Heart left ventricle (tissue), 16 donors: ENCODE measurements at regions of chr16 and their contacts with region 1.

Region 1: GRCh38 chr16:660459-661183 is 7.3 kb upstream of the RHOT2 start:
- DNase-seq: peak; percentile 87 to 93 (median 92)
- ATAC-seq: peak; percentile 81 to 90 (median 82)
- H3K4me3 ChIP-seq: peak overlapping the region in 9 of 12 donors; percentile 11 to 42 (median 32)
- H3K27ac ChIP-seq: peak overlapping the region in 11 of 12 donors; percentile 3 to 80 (median 55)
- H3K4me1 ChIP-seq: peaks cover 0 to 16% (median 11%) of the 10 kb centered on the region in 12 donors
- H3K27me3 ChIP-seq: no peaks in the 10 kb centered on the region
- CTCF ChIP-seq: peak; percentile 36 to 78 (median 57)
- POLR2A ChIP-seq: peak in 1 of 2 donors; percentile 49

Region 2: DNA sequence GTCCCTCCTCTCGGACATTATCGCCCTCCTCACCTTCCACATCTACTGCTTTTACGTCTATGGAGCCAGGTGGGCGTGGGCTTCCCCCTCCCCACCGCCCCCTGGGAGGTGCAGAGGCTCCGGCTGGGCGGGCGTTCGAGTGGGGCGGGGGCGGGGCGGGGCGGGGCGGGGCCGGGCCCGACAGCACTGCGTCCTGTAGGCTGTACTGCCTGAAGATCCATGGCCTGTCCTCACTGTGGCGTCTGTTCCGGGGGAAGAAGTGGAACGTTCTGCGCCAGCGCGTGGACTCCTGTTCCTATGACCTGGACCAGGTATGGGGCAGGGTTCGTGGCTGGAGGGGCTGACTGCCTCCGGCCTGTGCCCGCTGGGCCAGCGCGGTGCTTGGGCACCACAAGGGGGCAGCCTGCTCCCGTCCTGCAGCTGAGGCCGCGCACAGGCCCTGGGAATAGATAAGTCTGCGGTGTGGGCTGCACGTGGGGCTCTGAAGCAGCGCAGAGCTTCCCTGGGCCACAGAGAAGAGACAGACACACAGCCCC is 81.7 kb before region 1 on chr16:
- intact Hi-C with region 1: loop called in 6 of 10 experiments (anchors 2 to 10 kb)
- DNase-seq: peak; percentile 58 to 85 (median 66)
- ATAC-seq: peak; percentile 63 to 82 (median 78)
- H3K4me3 ChIP-seq: peak overlapping the region in 6 of 12 donors; percentile 10 to 45 (median 26)
- H3K27ac ChIP-seq: no peak overlapping the region
- H3K4me1 ChIP-seq: peaks cover 0 to 17% (median 0%) of the 10 kb centered on the region in 12 donors
- H3K27me3 ChIP-seq: no peaks in the 10 kb centered on the region
- CTCF ChIP-seq: peak; percentile 65 to 89 (median 74)
- POLR2A ChIP-seq: no peak

Region 3: GRCh38 chr16:583815-584591 is 76.6 kb before region 1 on chr16:
- intact Hi-C with region 1: loop called in 6 of 10 experiments (anchors 2 to 10 kb)
- DNase-seq: peak in 2 of 5 donors; percentile 33 to 63
- ATAC-seq: no peak
- H3K4me3 ChIP-seq: no peak overlapping the region
- H3K27ac ChIP-seq: peak overlapping the region in 3 of 12 donors; percentile 24 to 67 (median 60)
- H3K4me1 ChIP-seq: peaks cover 5 to 52% (median 19%) of the 10 kb centered on the region in 12 donors
- H3K27me3 ChIP-seq: no peaks in the 10 kb centered on the region
- CTCF ChIP-seq: no peak
- POLR2A ChIP-seq: no peak